ENCODE measurements at regions of chr5 and their contacts with region 1.

Region 1: GRCh38 chr5:137754126-137754960 is at the start of gene HNRNPA0:
- DNase-seq: peak; percentile 98
- H3K4me3 ChIP-seq: peak within 1 kb of the TSS; percentile 88 to 99 (median 94)
- H3K27ac ChIP-seq: peak within 1 kb of the TSS; percentile 92
- H3K4me1 ChIP-seq: peaks cover 18% of the 10 kb centered on the region
- H3K27me3 ChIP-seq: peaks cover 0 to 2% of the 10 kb centered on the region in 2 experiments
- CTCF ChIP-seq: no peak
- POLR2A ChIP-seq: peak; percentile 97
- total RNA-seq, gene HNRNPA0: 37.5 and 37.9 TPM in 2 replicates

Region 2: DNA sequence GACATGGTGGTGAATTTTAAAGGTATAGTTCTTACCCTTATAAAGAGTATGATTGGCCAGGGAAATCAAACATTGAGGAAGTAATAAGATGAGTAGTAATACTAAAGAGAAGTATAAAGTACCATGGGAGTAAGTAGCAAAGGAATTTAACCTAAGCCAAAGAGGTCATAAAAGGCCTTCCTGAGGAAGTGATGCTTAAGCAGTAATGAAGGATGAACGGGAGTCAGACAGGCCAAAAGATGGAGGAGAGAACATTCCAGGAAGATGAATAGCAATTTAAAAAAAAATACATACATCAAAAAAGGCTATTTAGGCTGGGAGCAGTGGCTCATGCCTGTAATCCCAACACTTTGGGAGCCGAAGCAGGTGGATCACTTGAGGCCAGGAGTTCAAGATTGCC is 47.5 kb before region 1 on chr5:
- CTCF ChIA-PET with region 1: no interaction called
- POLR2A ChIA-PET with region 1: no interaction called
- dilution Hi-C with region 1: no loop called
- intact Hi-C with region 1: loop called (anchors 1 kb)
- DNase-seq: peak; percentile 77
- H3K4me3 ChIP-seq: no peak overlapping the region
- H3K27ac ChIP-seq: peak overlapping the region; percentile 69
- H3K4me1 ChIP-seq: peaks cover 17% of the 10 kb centered on the region
- H3K27me3 ChIP-seq: no peaks in the 10 kb centered on the region
- CTCF ChIP-seq: no peak
- POLR2A ChIP-seq: peak; percentile 32

Region 3: DNA sequence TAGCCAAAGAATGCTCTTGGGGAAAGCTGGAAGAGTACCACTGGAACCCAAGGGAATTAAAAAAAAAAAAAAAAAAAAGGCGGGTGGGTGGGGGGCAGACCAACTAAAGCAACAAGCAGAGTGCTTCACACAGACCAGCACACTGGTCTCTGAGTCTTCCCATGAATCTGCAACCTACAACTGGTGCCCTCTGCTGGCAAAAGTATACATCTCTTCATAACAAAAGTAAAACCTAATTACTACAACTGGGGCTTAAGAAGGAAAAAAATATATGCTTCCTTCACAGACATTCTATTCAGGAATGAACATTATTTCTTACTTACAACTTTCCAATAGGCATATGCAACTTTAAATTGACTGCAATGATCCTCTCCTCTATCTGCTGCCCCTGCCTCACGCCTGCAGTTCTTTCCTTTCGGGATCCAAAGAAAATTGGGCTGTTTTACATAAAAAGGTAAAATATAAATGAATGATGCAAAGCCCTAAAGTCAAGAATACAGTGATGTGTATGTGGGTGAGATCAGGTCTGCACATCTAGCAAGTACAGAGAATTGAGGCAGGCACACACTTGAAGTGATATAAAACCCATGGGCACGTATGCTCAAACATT is 11.2 kb before region 1 on chr5:
- CTCF ChIA-PET with region 1: interaction called, 24 read pairs
- POLR2A ChIA-PET with region 1: interaction called, 4 read pairs
- dilution Hi-C with region 1: no loop called
- intact Hi-C with region 1: no loop called
- DNase-seq: peak; percentile 72
- H3K4me3 ChIP-seq: no peak overlapping the region
- H3K27ac ChIP-seq: no peak overlapping the region
- H3K4me1 ChIP-seq: no peaks in the 10 kb centered on the region
- H3K27me3 ChIP-seq: no peaks in the 10 kb centered on the region
- CTCF ChIP-seq: peak; percentile 65 to 67
- POLR2A ChIP-seq: no peak

Region 4: GRCh38 chr5:138065102-138065501 is 310.8 kb after region 1 on chr5:
- CTCF ChIA-PET with region 1: interaction called, 4 read pairs
- POLR2A ChIA-PET with region 1: no interaction called
- dilution Hi-C with region 1: no loop called
- intact Hi-C with region 1: loop called (anchors 1 kb)
- DNase-seq: no peak
- H3K4me3 ChIP-seq: no peak overlapping the region
- H3K27ac ChIP-seq: no peak overlapping the region
- H3K4me1 ChIP-seq: no peaks in the 10 kb centered on the region
- H3K27me3 ChIP-seq: no peaks in the 10 kb centered on the region
- CTCF ChIP-seq: peak; percentile 16 to 44
- POLR2A ChIP-seq: no peak

Region 5: GRCh38 chr5:138274189-138274853 is 520.0 kb after region 1 on chr5 and contains the start of gene GFRA3:
- CTCF ChIA-PET with region 1: no interaction called
- POLR2A ChIA-PET with region 1: no interaction called
- dilution Hi-C with region 1: no loop called
- intact Hi-C with region 1: no loop called
- DNase-seq: no peak
- H3K4me3 ChIP-seq: peak within 1 kb of the TSS in 2 of 3 experiments; percentile 19 to 41
- H3K27ac ChIP-seq: no peak within 1 kb of the TSS
- H3K4me1 ChIP-seq: no peaks in the 10 kb centered on the region
- H3K27me3 ChIP-seq: peaks cover 0 to 4% of the 10 kb centered on the region in 2 experiments
- CTCF ChIP-seq: no peak
- POLR2A ChIP-seq: no peak
- total RNA-seq, gene GFRA3: not detected in 2 replicates